Prostate gland (tissue), 2 donors: ENCODE measurements at regions of chr12 and their contacts with region 1.

Region 1: GRCh38 chr12:27523642-27524493 is at the start of gene PPFIBP1:
- DNase-seq: peak; percentile 99
- H3K4me3 ChIP-seq: peak within 1 kb of the TSS; percentile 65 to 67
- H3K27ac ChIP-seq: peak within 1 kb of the TSS; percentile 85 to 88
- H3K4me1 ChIP-seq: no peaks in the 10 kb centered on the region
- H3K27me3 ChIP-seq: no peaks in the 10 kb centered on the region
- CTCF ChIP-seq: peak in 1 of 4 experiments; percentile 40
- POLR2A ChIP-seq: peak; percentile 89
- total RNA-seq, gene PPFIBP1: 61.3 to 121 TPM

Region 2: GRCh38 chr12:27434673-27435565 is 88.9 kb before region 1 on chr12:
- intact Hi-C with region 1: loop called (anchors 5 kb)
- DNase-seq: peak; percentile 4
- H3K4me3 ChIP-seq: no peak overlapping the region
- H3K27ac ChIP-seq: no peak overlapping the region
- H3K4me1 ChIP-seq: no peaks in the 10 kb centered on the region
- H3K27me3 ChIP-seq: no peaks in the 10 kb centered on the region
- CTCF ChIP-seq: peak in 2 of 4 experiments; percentile 24 to 64
- POLR2A ChIP-seq: no peak

Region 3: GRCh38 chr12:27635349-27635972 is 111.6 kb after region 1 on chr12:
- intact Hi-C with region 1: loop called (anchors 5 kb)
- DNase-seq: no peak
- H3K4me3 ChIP-seq: no peak overlapping the region
- H3K27ac ChIP-seq: no peak overlapping the region
- H3K4me1 ChIP-seq: no peaks in the 10 kb centered on the region
- H3K27me3 ChIP-seq: no peaks in the 10 kb centered on the region
- CTCF ChIP-seq: peak in 3 of 4 experiments; percentile 51 to 74 (median 66)
- POLR2A ChIP-seq: no peak